ENCODE measurements at regions of chr10 and their contacts with region 1.

Region 1: DNA sequence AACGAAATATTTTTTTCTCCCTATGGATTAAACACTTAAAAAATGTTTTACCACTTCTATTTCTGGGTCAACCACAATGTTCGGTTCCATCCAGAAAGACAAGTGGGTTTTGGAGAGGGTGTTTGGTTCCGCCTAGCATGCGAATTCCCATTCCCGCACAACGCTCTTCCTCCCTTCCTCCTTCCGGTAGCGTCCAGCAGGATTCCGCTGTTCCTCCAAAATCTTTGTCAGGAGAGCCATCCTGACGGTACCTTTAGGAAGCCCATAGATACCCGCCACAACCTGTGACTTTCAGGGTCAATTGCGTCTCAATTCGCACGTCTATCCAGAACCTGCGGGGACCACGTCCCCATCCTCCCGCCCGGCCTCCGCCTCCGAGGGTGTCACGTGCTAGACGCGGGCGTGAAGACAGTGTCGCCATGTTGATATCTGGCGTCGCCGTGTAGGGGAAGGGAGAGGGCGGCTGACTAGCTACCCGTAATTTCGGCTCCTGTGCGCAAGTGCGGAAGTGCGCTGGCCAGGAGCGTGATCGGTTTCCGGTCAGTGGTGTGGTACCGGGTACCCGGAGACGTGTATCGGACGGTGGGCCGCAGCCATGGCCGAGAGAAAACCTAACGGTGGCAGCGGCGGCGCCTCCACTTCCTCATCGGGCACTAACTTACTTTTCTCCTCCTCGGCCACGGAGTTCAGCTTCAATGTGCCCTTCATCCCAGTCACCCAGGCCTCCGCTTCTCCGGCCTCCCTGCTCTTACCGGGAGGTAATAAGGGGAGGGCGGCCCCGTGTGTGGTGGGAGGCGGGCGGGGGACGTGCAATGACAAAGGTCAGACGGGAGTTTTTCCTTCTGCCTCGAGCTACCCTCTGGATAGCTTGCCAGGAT is at the start of gene SEC23IP:
- DNase-seq: peak; percentile 95 to 96
- H3K4me3 ChIP-seq: peak within 1 kb of the TSS; percentile 93
- H3K4me3 Mint-ChIP-seq: peak within 1 kb of the TSS; percentile 79
- H3K27ac Mint-ChIP-seq: peak within 1 kb of the TSS; percentile 76
- H3K4me1 ChIP-seq: peaks cover 31% of the 10 kb centered on the region
- H3K4me1 Mint-ChIP-seq: peaks cover 38% of the 10 kb centered on the region
- H3K27me3 ChIP-seq: no peaks in the 10 kb centered on the region
- H3K27me3 Mint-ChIP-seq: no peaks in the 10 kb centered on the region
- CTCF ChIP-seq: no peak
- total RNA-seq, gene SEC23IP: 108 and 116 TPM in 2 replicates

Region 2: DNA sequence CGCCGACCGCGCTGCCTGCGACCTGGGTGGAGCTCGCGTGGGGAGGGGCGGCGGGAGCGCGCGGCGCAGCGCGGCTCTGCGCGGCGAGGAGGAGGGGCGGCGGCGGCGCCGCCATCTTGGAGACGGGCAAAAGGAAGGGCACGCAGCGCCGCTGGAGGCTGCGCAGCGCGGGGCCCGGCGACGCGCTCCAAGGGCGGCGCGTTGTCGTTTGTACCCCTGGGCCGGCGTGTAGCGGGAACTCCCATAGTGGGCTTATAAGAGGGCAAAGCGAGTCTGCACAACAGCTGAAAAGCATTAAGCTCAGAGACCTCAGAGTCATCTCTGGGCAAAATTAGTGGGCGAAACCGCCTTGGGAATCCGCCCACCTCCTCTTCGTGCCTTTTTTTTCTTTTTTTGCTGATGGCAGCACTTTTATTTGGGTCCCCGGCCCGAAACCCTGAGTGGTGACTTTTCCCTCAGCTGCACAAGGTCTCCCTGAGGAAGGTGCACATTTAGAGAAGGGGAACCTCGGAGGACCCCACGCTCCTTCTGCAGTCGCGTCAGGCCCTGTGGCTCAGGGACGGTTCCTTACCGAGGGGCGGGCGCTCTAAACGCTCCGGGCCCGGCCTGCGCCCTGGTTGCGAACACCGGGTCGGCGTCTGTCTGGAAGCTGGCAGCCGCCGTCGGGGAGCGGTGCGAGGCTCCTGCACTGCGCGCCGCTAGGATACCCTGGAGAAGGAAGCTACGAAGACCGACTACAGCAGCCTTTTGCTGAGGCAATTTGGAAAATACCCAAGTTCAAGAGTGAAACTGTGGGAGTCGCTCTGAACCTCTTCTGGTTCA is 19.4 kb before region 1 on chr10:
- CTCF ChIA-PET with region 1: interaction called, 3 read pairs
- POLR2A ChIA-PET with region 1: interaction called, 29 read pairs
- intact Hi-C with region 1: loop called (anchors 1 kb)
- DNase-seq: peak; percentile 84 to 90
- H3K4me3 ChIP-seq: peak overlapping the region; percentile 56
- H3K4me3 Mint-ChIP-seq: peak overlapping the region; percentile 88
- H3K27ac Mint-ChIP-seq: peak overlapping the region; percentile 83
- H3K4me1 ChIP-seq: peaks cover 14% of the 10 kb centered on the region
- H3K4me1 Mint-ChIP-seq: peaks cover 16% of the 10 kb centered on the region
- H3K27me3 ChIP-seq: no peaks in the 10 kb centered on the region
- H3K27me3 Mint-ChIP-seq: no peaks in the 10 kb centered on the region
- CTCF ChIP-seq: no peak